Activated T-helper 1 cell treated with anti-CD3 and anti-CD28 coated beads, Interleukin-12 subunit alpha, Interleukin-12 subunit beta, Interleukin-2, Interleukin-4 antibody, amounts not matched to agents 30 ng/mL and 10 ng/mL and 1 ng/mL, durations not matched to agents 14 hours and 24 hours and 36 hours (primary cell): ENCODE measurements at regions of chr1 and their contacts with region 1.

Region 1: DNA sequence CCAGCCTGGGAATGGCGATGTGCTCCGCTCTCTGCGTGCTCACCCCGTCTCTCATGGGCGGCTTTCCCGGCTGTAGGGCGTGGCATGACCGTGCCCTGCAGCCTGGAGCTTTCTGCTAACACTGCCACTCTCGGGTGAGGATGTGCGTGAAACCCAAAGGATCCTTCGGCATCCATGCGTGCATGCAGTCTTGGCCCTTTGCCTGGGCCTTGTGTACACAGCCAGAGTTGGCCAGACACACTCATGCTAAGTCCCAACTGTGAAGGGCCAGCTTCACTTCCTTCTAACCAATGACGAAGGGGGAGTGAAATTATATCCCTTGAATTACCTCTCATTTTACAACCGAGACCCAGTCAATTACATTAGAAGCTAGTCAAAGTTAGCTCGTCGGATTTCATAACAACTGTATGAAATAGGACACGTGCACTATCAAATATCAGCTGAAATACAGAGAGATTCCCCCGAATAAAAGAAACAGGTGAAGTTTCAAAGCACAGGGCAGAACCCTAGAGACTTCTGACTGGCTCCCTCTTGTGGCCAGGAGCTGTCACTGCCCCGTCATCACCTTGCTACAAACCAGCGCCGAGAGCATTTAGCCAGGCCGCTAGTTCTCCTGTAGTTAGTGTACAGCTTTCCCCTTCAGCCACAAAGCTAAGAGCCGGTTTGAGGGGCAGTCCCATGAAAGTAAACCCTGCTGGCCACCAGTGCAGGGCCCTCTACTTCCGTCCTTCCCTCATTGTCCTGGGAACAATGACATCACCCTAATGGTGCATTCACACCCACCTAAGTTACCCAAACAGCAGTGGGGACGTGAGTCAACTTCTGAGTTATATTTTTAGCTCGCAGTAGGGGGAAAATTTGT is 63.4 kb upstream of the COA6 start:
- DNase-seq: peak; percentile 47
- H3K4me3 Mint-ChIP-seq: no peak overlapping the region
- H3K27ac Mint-ChIP-seq: peak overlapping the region; percentile 5
- H3K4me1 Mint-ChIP-seq: peaks cover 14% of the 10 kb centered on the region
- H3K27me3 Mint-ChIP-seq: peaks cover 1% of the 10 kb centered on the region

Region 2: DNA sequence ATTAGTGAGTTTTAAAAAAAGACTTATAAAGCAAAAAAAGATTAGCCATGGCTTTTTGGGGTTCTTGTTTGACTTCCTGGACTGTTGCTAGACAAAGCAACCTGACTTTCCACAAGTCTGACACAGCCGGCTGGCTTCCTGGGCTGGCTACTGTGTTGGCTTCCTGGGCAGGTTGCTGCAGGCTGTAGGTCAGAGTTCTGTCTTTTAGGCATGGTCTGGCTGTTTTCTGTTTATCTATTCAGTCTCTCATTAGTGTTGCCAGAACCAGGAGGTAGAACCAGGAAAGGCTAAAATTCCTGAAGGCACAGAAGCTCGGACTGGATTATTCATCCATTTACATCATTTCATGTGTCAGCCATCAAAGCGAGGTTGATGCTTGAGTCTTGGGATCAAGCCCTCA is 494.0 kb before region 1 on chr1:
- intact Hi-C with region 1: no loop called
- DNase-seq: no peak
- H3K4me3 Mint-ChIP-seq: no peak overlapping the region
- H3K27ac Mint-ChIP-seq: no peak overlapping the region
- H3K4me1 Mint-ChIP-seq: no peaks in the 10 kb centered on the region
- H3K27me3 Mint-ChIP-seq: no peaks in the 10 kb centered on the region

Region 3: DNA sequence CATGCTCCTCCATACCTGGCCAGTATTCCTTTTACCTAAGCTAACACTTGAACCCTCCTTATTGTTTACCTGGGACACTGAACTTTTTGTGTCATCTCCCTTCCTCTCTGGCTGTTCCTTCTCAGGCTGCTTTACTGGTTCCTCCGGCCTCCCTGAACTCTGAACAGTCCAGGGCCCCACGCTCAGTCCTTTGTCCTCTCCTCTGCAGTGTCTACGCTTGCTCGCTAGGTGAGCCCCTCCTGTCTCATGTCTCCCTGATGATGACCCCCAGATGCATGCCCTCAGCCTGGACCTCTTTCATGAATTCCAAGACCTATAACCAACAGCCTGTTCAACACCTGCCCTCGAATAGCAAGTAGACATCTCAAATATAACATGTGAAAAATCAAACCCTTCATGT is 45.0 kb before region 1 on chr1:
- intact Hi-C with region 1: no loop called
- DNase-seq: no peak
- H3K4me3 Mint-ChIP-seq: no peak overlapping the region
- H3K27ac Mint-ChIP-seq: no peak overlapping the region
- H3K4me1 Mint-ChIP-seq: peaks cover 18% of the 10 kb centered on the region
- H3K27me3 Mint-ChIP-seq: peaks cover 2% of the 10 kb centered on the region

Region 4: GRCh38 chr1:234326497-234327366 is 16.9 kb after region 1 on chr1:
- intact Hi-C with region 1: loop called (anchors 1 kb)
- DNase-seq: peak; percentile 53
- H3K4me3 Mint-ChIP-seq: peak overlapping the region; percentile 60
- H3K27ac Mint-ChIP-seq: peak overlapping the region; percentile 33
- H3K4me1 Mint-ChIP-seq: peaks cover 34% of the 10 kb centered on the region
- H3K27me3 Mint-ChIP-seq: peaks cover 25% of the 10 kb centered on the region